ENCODE measurements at regions of chr21 and their contacts with region 1.

Region 1: DNA sequence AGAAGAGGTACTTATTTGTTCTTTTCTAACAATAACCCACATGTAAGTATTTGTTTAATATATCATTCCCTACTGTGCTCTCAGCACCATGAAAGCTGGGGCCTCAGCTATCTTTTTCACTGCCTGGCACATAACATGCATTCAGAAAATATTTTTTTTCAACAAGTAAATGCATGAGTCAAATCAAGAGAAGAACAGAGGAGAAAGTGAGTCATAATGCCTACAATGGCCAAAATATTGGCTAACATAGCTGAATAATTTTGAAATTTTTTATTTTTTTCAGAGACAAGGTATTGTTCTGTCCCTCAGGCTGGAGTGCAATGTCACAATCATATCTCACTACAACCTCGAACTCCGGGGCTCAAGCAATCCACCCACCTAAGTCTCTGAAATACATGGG is 252.2 kb upstream of the ADAMTS5 start:
- DNase-seq: peak; percentile 82
- H3K4me3 Mint-ChIP-seq: no peak overlapping the region
- H3K27ac Mint-ChIP-seq: peak overlapping the region; percentile 83
- H3K4me1 Mint-ChIP-seq: peaks cover 15% of the 10 kb centered on the region
- H3K27me3 Mint-ChIP-seq: no peaks in the 10 kb centered on the region
- CTCF ChIP-seq: no peak

Region 2: DNA sequence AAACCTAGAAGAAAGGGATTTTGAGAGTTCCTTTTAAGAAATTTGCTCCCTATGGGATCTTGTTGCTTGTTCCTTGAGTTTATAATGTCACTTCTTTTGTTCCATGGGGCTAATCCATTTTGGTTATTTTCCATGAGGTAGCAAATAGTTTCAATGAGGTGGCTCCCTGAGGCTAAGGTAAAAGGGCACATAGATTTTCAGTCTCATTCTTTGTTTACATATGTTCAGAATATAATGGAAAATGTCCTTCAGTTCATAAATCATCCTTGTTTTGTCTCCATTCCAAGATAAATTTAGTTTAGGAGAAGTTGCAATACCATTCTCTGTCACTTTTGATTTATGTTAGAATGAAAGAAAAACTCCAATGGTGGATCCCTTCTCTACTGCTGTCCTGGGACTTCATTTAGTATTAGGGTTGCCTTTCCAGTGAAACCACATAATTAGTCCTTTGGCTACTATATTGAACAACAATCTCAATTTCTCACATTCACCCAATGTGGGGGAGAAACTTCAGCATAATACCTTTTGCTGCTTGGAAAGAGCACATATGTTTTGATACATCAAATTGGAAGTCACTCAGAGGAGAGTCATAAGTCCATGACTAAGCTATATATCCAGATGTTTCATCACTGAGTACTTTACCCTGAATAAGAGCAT is 171.3 kb before region 1 on chr21:
- CTCF ChIA-PET with region 1: no interaction called
- POLR2A ChIA-PET with region 1: interaction called, 12 read pairs
- intact Hi-C with region 1: no loop called
- DNase-seq: peak; percentile 68
- H3K4me3 Mint-ChIP-seq: peak overlapping the region; percentile 18
- H3K27ac Mint-ChIP-seq: peak overlapping the region; percentile 93
- H3K4me1 Mint-ChIP-seq: peaks cover 24% of the 10 kb centered on the region
- H3K27me3 Mint-ChIP-seq: no peaks in the 10 kb centered on the region
- CTCF ChIP-seq: no peak

Region 3: DNA sequence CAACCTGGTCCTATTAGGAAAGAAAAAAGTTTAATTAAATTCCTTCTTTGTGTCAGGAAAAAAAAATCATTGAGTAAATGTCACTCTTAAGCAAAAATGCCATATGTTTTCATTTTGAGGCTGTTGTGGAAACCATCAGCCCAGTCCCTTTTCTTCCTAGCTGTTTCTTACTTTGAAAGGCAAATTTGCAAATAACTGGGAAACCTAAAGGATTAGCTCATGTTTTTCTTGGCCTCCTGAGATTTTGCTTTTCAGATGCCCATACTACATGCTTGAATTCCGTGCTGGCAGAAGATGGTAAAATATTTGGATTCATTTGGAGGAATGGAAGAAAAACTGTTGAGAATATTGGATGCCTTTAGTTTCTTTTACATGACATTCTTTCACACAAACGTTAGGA is 70.0 kb before region 1 on chr21:
- CTCF ChIA-PET with region 1: no interaction called
- POLR2A ChIA-PET with region 1: no interaction called
- intact Hi-C with region 1: no loop called
- DNase-seq: no peak
- H3K4me3 Mint-ChIP-seq: no peak overlapping the region
- H3K27ac Mint-ChIP-seq: no peak overlapping the region
- H3K4me1 Mint-ChIP-seq: no peaks in the 10 kb centered on the region
- H3K27me3 Mint-ChIP-seq: no peaks in the 10 kb centered on the region
- CTCF ChIP-seq: no peak

Region 4: GRCh38 chr21:27269646-27270045 is 50.6 kb after region 1 on chr21:
- CTCF ChIA-PET with region 1: no interaction called
- POLR2A ChIA-PET with region 1: interaction called, 3 read pairs
- intact Hi-C with region 1: loop called (anchors 2 kb)
- DNase-seq: peak; percentile 83
- H3K4me3 Mint-ChIP-seq: no peak overlapping the region
- H3K27ac Mint-ChIP-seq: peak overlapping the region; percentile 50
- H3K4me1 Mint-ChIP-seq: peaks cover 13% of the 10 kb centered on the region
- H3K27me3 Mint-ChIP-seq: no peaks in the 10 kb centered on the region
- CTCF ChIP-seq: no peak

Region 5: DNA sequence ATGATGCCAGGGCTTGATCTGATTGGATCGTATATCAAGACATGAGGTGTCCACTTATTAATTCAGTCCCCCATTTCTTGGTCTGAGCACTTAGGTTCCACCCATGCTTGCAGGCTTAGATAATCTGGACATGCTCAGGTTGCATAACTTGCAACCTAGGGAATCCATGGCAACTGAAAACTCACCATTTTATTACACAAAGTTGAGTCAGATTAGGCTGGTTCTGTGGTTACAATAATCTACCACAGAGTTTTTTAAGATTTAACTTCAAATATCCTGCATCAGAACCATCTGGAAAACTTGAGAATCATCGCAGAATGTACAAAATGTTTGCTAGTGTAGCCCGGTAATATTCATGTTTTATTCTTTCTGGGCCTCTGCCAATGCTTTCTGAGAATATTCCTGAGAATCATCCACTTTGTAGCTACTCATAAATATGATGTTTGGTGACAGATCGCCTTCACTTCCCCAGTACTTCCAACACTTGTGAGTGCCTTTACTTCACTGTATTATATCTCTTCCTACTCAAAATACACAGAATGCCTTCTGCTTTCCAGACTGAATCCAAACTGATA is 455.1 kb after region 1 on chr21:
- CTCF ChIA-PET with region 1: no interaction called
- POLR2A ChIA-PET with region 1: no interaction called
- intact Hi-C with region 1: no loop called
- DNase-seq: peak; percentile 11
- H3K4me3 Mint-ChIP-seq: no peak overlapping the region
- H3K27ac Mint-ChIP-seq: peak overlapping the region; percentile 29
- H3K4me1 Mint-ChIP-seq: peaks cover 7% of the 10 kb centered on the region
- H3K27me3 Mint-ChIP-seq: no peaks in the 10 kb centered on the region
- CTCF ChIP-seq: no peak